ENCODE measurements at regions of chr11 and their contacts with region 1.

Region 1: DNA sequence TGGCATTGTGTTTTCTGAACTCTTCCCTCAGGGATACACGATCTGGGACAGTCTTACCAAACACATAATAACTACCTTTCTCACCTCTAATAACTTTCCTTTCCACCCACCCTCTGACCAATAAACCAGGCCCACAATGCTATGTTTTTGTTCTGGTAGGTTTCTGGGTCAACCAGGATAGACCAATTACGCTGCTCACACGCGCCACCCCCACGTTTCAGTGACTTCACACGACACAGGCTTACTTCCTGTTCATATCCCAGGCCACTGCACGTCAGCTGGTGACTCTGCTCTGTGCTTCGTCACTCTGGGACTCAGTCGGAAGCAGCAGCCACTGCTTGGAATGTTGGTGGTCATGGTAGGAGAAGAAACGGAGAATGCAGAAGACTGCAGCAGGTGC is 2.5 kb downstream of the KRTAP5-4 start:
- DNase-seq: peak; percentile 55
- ATAC-seq: peak; percentile 90
- H3K4me3 Mint-ChIP-seq: no peak overlapping the region
- H3K27ac Mint-ChIP-seq: peak overlapping the region; percentile 11
- H3K4me1 Mint-ChIP-seq: peaks cover 6% of the 10 kb centered on the region
- H3K27me3 Mint-ChIP-seq: peaks cover 23% of the 10 kb centered on the region
- CTCF ChIP-seq: no peak

Region 2: DNA sequence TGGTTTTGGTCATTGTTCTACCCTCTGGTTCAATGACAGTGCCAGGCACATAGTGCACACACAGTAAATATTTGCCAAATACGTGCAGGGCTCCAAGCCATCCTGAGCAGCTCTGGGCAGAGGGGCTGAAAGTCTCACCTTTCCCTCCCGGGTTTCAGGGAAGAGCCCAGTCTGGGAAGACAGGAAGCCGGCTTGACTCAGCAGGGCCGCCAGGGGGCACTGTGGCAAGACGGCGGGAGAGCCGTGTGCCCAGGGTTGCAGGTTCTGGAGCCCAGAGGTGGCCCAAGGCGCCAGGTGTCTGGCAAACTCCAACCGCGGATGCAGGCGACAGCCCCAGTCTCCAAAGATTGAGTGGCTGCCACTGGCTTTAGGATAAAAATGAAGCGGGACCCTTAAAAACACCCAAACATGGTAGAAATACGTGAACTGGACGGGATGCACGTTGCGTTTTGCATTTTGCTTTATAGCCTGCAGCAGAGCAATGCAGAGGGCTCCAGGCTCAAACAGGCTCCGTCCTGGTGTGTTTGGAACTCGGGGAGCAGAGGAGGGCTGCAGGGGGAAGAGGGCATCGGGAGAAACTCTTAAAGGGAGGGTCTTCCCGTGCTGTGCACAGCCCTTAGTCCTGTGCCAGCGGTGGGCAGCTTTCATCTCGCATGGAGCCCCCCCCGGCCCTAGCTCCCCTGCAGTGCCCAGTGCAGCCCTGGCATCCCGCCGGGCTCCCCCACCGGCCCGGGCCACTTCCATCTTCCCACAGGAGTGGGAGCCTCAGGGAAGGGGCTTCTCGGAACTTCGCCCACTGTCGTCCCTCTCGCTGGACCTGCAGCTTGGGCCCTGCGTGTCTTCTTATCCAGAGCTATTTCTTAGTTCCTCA is 20.9 kb after region 1 on chr11:
- CTCF ChIA-PET with region 1: interaction called, 24 read pairs
- POLR2A ChIA-PET with region 1: no interaction called
- intact Hi-C with region 1: no loop called
- DNase-seq: peak; percentile 26
- ATAC-seq: peak; percentile 42
- H3K4me3 Mint-ChIP-seq: no peak overlapping the region
- H3K27ac Mint-ChIP-seq: no peak overlapping the region
- H3K4me1 Mint-ChIP-seq: no peaks in the 10 kb centered on the region
- H3K27me3 Mint-ChIP-seq: peaks cover 9% of the 10 kb centered on the region
- CTCF ChIP-seq: peak; percentile 95

Region 3: GRCh38 chr11:1669661-1670218 is 50.3 kb after region 1 on chr11:
- CTCF ChIA-PET with region 1: no interaction called
- POLR2A ChIA-PET with region 1: no interaction called
- intact Hi-C with region 1: no loop called
- DNase-seq: no peak
- ATAC-seq: peak; percentile 17
- H3K4me3 Mint-ChIP-seq: no peak overlapping the region
- H3K27ac Mint-ChIP-seq: no peak overlapping the region
- H3K4me1 Mint-ChIP-seq: no peaks in the 10 kb centered on the region
- H3K27me3 Mint-ChIP-seq: peaks cover 22% of the 10 kb centered on the region
- CTCF ChIP-seq: no peak